A673 (cell line): ENCODE measurements at regions of chr14 and their contacts with region 1.

Region 1: DNA sequence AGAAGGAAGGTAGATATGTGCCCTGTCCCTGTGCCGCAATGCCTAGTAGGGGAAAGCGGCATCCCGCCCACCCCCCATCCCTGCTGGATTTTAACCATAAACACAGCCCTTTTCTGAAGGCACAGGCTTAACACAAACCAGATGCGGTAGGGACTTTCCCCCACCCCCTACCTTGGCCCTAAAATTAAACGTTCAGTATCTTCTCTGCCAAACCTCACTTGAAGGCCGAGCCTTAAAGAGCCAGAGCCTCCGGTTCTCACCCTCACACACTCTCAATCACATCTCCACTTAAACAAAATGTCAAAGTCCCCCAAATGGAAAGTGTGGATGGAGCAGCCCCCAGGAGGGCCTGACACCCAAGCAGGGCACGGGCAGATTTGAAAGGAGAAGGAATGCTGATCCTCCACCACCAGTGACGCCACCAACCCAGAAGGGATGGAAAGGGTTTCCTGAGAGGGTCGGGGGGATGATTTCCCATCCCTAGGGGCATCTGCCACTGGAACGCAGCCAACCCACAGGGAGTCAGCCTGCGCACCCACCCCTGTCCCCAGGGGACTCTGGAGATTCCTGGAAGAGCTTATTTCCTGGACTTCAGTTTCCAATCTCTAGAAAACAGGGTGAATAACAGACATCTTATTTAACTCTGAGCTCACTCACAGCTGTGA is 26.4 kb downstream of the ACTN1 start:
- DNase-seq: peak; percentile 92
- H3K4me3 ChIP-seq: peak overlapping the region; percentile 24
- H3K27ac ChIP-seq: peak overlapping the region; percentile 94
- H3K4me1 ChIP-seq: peaks cover 91% of the 10 kb centered on the region
- H3K27me3 ChIP-seq: no peaks in the 10 kb centered on the region
- CTCF ChIP-seq: no peak

Region 2: DNA sequence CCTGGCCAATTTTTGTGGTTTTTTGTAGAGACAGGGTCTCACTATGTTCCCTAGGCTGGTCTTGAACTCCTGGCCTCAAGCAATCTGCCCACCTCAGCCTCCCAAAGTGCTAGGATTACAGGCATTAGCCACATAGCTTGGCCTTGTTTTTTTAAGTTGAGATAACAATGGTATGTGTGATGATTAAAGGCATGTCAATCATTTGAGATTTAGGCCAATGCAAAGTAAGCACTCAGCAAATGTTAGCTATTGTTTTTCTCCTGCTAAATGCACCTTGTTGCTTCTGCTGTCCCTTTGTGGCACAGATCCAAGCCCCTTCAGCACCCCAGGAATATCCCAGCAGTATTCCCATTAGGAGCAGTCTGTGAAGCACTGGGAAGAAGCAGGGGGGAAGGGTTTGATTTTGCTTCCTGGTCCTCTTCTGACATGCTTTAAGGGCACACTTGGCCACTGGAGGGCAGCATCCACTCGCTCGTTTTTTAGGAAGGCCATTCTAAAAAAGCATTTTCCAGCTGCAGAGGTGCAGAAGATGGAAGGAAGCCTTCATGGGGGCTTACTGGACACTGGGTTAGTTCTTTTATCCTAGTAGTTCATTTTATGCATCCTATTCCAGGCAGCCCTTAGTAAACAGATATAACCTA is 89.6 kb before region 1 on chr14:
- CTCF ChIA-PET with region 1: no interaction called
- POLR2A ChIA-PET with region 1: no interaction called
- intact Hi-C with region 1: no loop called
- DNase-seq: peak; percentile 86
- H3K4me3 ChIP-seq: no peak overlapping the region
- H3K27ac ChIP-seq: no peak overlapping the region
- H3K4me1 ChIP-seq: no peaks in the 10 kb centered on the region
- H3K27me3 ChIP-seq: no peaks in the 10 kb centered on the region
- CTCF ChIP-seq: peak; percentile 87

Region 3: DNA sequence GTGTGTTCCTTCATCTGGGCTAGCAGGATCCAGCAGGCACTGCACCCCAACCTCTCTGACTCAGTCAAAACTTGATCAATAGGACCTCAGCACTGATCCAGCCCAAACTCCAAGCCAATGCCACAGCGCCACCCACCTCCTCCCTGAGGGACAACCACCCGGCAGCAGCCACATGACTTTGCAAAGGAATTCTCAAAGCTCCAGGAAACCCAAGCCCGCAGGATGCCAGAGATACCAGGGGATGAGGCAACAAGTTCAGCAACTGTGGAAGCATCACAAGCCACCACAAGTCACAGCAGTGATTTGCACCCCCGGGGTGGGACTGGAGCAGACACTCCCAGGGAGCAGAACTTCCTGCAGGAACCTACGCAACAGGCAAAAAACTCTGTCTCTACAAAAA is 10.8 kb before region 1 on chr14:
- CTCF ChIA-PET with region 1: interaction called, 10 read pairs
- POLR2A ChIA-PET with region 1: no interaction called
- intact Hi-C with region 1: no loop called
- DNase-seq: peak; percentile 92
- H3K4me3 ChIP-seq: no peak overlapping the region
- H3K27ac ChIP-seq: peak overlapping the region; percentile 72
- H3K4me1 ChIP-seq: peaks cover 96% of the 10 kb centered on the region
- H3K27me3 ChIP-seq: no peaks in the 10 kb centered on the region
- CTCF ChIP-seq: peak; percentile 81

Region 4: DNA sequence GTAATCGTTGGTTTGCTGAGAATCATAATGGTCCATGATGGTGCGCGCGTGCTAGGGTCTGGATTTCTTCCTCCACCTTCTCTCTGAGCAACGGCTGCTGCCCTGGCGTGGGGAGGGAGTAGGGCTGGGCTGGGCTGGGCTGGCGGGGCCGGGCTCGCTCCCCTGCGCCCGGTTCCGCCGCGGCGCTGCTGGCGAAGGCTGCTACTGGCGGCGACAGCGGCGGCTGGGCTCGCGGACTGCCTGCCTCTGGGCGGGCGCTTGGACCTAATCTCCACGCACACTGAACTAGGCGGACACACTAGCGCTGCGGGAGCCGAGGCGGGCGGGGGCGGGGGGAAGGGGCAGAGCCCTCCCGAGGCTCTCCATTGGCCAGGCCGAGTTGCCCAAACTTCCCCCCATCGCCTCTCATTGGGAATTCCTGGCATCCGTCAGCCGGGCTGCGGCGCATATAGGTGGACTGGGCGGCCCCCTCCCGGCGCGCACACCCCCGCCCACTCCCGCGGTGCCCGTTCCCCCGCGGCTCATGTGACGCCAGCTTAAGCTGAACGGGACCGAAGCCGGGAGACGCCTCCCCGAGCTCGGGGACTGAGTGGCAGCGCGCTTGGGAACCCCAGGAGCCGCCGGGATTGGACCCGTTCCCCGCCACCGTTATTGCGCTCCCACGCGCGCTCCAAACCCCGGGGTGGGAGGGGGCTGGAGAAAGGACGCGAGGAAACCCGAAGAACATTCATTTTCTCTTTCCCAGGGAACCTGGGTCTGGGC is 26.5 kb after region 1 on chr14 and contains the start of gene ACTN1:
- CTCF ChIA-PET with region 1: no interaction called
- POLR2A ChIA-PET with region 1: interaction called, 3 read pairs
- intact Hi-C with region 1: loop called (anchors 2 kb)
- DNase-seq: peak; percentile 99
- H3K4me3 ChIP-seq: peak within 1 kb of the TSS; percentile 100
- H3K27ac ChIP-seq: peak within 1 kb of the TSS; percentile 96
- H3K4me1 ChIP-seq: peaks cover 13% of the 10 kb centered on the region
- H3K27me3 ChIP-seq: no peaks in the 10 kb centered on the region
- CTCF ChIP-seq: no peak
- total RNA-seq, gene ACTN1: 148 and 163 TPM in 2 replicates

Region 5: DNA sequence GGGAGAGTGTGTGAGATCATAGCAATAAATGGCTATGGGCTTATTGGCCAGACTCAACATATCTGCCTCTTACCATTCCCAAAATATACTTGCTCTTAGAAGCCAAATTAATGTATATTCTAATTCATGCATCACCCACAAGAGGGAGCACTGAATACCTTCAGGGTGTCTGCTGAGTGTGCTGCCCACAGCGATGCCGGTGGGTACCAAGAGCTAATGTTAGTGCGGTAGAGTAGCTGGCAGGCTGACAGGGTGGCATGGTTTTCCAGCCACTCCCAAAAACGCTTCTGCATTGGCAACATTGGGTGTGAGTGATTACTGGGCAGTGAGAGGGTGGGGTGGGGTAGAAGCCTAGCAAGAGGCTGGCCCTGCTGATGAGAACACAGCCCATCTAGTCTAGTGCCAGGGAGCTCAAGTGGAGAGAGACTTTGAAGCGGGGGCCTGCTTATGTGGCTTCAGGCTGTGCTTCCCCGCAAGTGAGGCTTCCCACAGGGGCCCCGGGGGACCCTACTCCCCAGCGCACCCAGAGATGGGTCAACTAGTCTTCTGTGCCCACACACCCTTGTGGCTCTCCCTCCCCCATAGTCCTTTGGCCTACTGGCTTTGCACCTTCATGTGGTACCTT is 522.6 kb after region 1 on chr14:
- CTCF ChIA-PET with region 1: no interaction called
- POLR2A ChIA-PET with region 1: no interaction called
- intact Hi-C with region 1: no loop called
- DNase-seq: peak; percentile 70
- H3K4me3 ChIP-seq: no peak overlapping the region
- H3K27ac ChIP-seq: no peak overlapping the region
- H3K4me1 ChIP-seq: no peaks in the 10 kb centered on the region
- H3K27me3 ChIP-seq: no peaks in the 10 kb centered on the region
- CTCF ChIP-seq: peak; percentile 69